ENCODE measurements at regions of chr7 and their contacts with region 1.

Region 1: DNA sequence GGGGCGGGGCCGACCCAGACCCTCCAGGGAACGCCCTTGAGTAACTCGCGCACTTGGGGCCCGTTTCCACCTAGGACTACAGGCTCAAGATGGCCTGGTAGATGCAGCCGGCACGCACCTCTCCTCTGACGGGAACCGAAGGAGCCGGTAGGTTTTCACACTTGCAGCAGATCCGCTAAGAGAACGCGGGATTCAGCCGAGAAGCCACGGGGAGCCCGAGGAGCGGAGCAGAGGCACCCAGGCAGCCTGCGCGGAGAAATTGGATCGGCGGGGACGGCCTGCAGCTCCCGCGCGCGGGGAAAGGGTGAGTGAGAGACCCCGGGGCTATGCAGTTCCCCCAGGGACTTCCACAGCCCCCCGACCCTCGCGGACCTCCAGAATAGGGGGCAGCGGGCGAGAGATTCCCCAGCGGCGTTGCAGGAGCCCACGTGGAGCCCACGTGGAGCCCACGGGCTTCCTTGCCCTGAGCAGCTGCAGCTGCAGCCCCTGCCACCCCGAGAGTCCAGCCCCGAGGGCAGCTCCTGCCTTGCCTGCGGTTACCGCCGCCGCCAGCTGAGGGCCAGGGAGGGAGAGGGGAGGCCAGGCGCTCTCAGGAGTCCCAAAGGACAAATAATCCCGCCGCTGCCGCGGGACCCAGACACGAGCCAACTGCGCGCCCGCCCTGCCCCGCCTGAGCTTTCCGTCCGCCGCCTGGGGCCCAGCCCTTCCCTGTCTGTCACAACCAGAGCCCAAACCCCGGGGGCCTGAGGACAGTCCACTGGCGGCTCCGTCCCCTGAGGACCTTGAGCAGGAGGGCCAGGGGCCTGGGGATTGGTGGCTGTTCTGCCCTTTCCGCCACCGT is 13.1 kb downstream of the IFT22 start:
- DNase-seq: peak; percentile 72
- ATAC-seq: peak; percentile 92
- H3K4me3 Mint-ChIP-seq: peak overlapping the region; percentile 80
- H3K27ac Mint-ChIP-seq: peak overlapping the region; percentile 91
- H3K4me1 Mint-ChIP-seq: peaks cover 10% of the 10 kb centered on the region
- H3K27me3 Mint-ChIP-seq: peaks cover 18% of the 10 kb centered on the region
- CTCF ChIP-seq: no peak

Region 2: GRCh38 chr7:101321491-101322401 is 13.3 kb after region 1 on chr7 and contains the start of gene IFT22:
- CTCF ChIA-PET with region 1: interaction called, 3 read pairs
- POLR2A ChIA-PET with region 1: interaction called, 14 read pairs
- intact Hi-C with region 1: no loop called
- DNase-seq: peak; percentile 91
- ATAC-seq: peak; percentile 99
- H3K4me3 Mint-ChIP-seq: peak within 1 kb of the TSS; percentile 86
- H3K27ac Mint-ChIP-seq: peak within 1 kb of the TSS; percentile 85
- H3K4me1 Mint-ChIP-seq: peaks cover 8% of the 10 kb centered on the region
- H3K27me3 Mint-ChIP-seq: no peaks in the 10 kb centered on the region
- CTCF ChIP-seq: no peak
- total RNA-seq, gene IFT22: 3.8 to 5.1 TPM

Measured in activated CD8-positive, alpha-beta T cell treated with anti-CD3 and anti-CD28 coated beads for 36 hours (primary cell).